ENCODE measurements at regions of chr5 and their contacts with region 1.

Region 1: DNA sequence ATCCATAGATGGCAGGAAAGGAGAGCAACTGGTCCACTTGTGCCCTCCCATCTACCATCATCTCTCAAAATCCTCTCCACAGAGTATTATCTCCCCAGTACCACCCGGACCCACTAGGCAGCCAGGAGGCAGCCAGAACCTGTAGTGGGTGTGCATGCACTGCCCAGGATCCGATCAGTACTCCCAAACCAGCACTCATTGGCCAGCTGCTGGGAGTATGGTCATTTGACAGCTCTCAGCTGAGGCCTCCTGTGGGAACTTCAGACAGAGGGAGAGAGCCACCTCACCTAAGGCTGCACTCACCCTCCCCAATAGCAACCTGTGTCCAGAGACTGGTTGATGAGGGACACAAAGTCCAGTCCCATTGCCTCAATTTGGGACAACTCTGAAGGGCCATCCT is 286.0 kb downstream of the TRIM36 start:
- DNase-seq: no peak
- ATAC-seq: no peak
- H3K4me3 ChIP-seq: no peak overlapping the region
- H3K27ac ChIP-seq: no peak overlapping the region
- H3K4me1 ChIP-seq: no peaks in the 10 kb centered on the region
- H3K27me3 ChIP-seq: peaks cover 0 to 2% (median 0%) of the 10 kb centered on the region in 3 donors
- CTCF ChIP-seq: no peak

Region 2: DNA sequence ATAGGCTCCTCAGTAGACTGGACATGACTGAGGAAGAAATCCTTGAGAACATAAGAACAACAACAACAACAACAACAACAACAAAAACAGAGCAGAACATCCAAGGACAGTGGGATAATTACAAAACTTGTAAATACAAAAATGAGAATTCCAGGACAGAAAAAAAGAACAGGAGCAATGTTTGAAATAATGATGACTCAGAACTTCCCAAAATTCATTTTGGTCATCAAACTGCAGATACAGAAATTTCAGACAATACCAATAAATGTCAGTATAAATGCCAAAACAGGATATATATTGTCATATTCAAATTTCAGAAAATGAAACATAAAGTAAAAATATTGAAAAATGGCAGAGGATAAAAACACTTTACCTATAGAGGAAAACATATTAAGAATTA is 27.1 kb after region 1 on chr5:
- intact Hi-C with region 1: loop called in 1 of 2 experiments (anchors 1 kb)
- DNase-seq: no peak
- ATAC-seq: no peak
- H3K4me3 ChIP-seq: no peak overlapping the region
- H3K27ac ChIP-seq: no peak overlapping the region
- H3K4me1 ChIP-seq: no peaks in the 10 kb centered on the region
- H3K27me3 ChIP-seq: no peaks in the 10 kb centered on the region
- CTCF ChIP-seq: no peak

Region 3: DNA sequence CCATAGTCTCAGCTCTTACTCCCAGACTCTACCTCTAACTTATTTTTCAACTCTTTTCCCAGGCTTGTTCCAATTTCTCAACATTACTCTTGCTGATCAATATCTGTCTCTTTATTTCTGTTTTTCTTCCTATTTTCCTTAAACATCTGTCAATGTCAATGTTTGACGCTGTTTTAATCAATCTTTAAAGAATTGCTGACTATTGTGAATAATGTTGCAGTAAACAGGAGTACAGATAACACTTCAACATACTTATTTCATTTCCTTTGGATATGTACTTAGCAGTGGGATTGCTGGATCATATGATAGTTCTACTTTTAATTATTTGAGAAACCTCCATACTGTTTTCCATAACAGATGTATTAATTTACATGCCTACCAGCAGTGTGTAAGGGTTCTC is 57.0 kb after region 1 on chr5:
- intact Hi-C with region 1: no loop called
- DNase-seq: no peak
- ATAC-seq: no peak
- H3K4me3 ChIP-seq: no peak overlapping the region
- H3K27ac ChIP-seq: no peak overlapping the region
- H3K4me1 ChIP-seq: no peaks in the 10 kb centered on the region
- H3K27me3 ChIP-seq: no peaks in the 10 kb centered on the region
- CTCF ChIP-seq: no peak

Measured in psoas muscle (tissue), 8 donors.